ENCODE measurements at regions of chr3 and their contacts with region 1.

Region 1: GRCh38 chr3:37967260-37967881 is 23.2 kb upstream of the VILL start:
- DNase-seq: no peak
- H3K4me3 ChIP-seq: no peak overlapping the region
- CTCF ChIP-seq: peak; percentile 95

Region 2: DNA sequence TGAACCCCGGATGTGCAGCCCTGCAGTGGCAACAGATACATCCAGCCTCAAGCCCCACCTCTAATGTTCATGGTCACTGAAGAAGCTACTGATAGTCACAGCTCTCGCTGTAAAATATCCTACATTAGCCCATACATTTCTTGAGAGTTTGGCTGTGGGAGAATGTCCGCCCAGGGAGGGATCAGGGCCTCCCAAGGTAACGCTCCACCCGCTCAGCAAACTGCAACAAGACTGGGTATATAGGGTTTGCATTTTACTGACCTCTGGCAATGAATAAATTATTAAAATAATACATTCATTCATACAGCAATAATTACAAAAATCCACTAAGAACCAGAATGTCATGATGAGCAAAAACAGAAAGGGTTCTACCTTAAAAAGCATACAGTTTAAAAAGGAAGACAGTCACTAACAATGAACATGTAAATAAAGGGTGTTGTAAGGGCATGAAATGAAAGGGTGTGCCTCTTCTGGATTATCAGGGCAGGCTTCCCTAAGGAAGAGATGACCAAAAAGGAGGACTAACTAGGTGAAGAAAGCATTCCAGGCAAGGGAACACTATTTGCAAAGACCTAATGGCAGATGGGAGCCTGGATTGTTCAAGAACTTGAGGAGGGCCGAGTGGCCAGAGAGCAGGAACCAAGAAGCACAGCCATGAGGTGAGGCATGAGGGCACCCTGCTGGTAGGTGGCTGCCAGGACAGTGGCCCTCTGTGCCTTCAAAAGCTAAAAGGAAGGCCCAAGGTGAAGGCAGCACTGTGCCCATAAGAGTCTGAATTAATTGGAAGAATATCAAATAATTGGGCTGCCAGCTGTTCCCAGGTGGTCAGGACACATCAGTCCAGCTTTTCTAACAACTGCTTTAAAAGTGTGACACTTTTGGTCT is 133.8 kb before region 1 on chr3:
- CTCF ChIA-PET with region 1: interaction called, 12 read pairs
- POLR2A ChIA-PET with region 1: no interaction called
- DNase-seq: no peak
- H3K4me3 ChIP-seq: no peak overlapping the region
- CTCF ChIP-seq: no peak

Region 3: DNA sequence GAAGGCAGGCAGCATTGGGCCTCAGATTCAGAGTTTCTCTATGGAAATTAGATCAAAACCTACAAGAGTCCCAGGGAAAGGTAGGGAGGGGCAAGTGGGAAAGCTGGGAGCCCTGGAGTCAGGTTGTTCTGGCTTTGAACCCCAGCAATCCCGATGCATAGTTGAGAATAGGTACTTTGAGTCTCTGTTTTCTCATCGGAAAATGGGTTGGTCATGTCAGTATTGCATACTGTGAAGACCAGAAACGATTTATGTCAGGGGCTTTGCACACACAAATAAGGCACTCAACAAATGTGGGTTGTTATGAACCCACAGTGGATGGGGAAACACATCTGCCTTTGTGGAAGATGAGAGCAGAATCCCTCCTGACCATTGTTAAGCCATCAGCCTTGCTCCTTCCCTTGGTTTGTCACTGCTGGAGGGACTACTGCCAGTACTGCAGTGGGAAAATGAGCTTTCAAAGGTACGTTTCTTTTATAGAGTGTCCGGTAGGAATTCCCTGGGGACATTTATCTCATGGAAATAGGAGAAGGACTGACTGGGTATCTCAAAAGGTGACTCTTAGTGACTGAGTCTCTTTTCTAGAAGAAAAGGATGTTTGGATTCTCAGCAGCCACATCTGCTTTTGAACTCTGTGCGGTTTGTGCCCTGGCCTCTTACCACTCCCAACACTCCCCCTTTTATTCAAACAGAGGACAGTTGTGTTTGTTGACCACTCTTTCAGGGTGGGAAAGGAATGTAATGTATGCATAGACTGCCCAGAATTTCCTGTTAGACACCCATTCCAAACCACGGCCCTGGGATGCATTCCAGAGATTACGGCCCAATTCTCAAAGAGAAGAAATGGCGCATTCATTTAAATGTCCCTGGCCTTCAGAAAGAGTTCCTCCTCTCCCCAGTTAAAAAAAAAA is 31.4 kb before region 1 on chr3:
- CTCF ChIA-PET with region 1: interaction called, 10 read pairs
- POLR2A ChIA-PET with region 1: no interaction called
- DNase-seq: peak; percentile 84
- H3K4me3 ChIP-seq: peak overlapping the region; percentile 6; the same call in 1 of the 2 replicates
- CTCF ChIP-seq: no peak

Region 4: DNA sequence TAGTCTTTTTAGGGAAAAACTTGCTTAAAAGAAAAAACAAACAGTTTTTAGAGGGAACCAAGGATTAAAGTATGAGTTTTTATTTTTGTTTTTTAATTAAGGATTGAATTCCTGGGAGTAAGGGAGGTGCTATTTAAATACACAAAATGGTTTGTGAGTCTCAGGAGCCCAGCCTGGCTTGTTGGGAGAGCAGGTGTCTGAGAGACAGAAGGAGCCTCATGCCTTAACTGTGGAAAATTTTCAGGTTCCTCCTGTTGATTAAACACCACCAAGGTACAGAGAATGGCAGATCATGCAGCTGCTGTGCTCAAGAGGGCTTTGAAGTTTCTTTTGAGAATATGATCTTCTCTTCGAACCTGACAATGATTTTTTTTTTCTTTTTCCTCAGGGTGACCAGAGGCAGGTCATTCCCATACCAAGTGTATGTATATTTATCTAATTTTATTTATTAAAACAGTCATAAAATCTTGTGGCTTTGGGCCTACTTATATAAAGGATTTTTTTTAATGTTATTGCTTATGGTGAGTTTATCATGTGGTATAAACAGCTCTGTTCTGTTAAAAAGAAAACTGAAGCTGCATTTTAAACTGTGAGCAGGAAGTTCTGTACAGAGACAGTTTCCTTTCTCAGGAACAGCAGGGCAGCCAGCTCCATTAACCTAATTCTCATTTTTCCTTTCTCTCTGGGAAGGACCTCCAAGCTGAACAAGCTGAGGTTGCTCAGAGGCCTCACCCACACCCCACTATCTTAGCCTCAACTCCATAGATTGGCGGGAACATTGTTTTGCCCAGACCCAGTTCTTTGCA is 10.4 kb before region 1 on chr3:
- CTCF ChIA-PET with region 1: interaction called, 145 read pairs
- POLR2A ChIA-PET with region 1: no interaction called
- DNase-seq: no peak
- H3K4me3 ChIP-seq: no peak overlapping the region
- CTCF ChIP-seq: no peak

Region 5: DNA sequence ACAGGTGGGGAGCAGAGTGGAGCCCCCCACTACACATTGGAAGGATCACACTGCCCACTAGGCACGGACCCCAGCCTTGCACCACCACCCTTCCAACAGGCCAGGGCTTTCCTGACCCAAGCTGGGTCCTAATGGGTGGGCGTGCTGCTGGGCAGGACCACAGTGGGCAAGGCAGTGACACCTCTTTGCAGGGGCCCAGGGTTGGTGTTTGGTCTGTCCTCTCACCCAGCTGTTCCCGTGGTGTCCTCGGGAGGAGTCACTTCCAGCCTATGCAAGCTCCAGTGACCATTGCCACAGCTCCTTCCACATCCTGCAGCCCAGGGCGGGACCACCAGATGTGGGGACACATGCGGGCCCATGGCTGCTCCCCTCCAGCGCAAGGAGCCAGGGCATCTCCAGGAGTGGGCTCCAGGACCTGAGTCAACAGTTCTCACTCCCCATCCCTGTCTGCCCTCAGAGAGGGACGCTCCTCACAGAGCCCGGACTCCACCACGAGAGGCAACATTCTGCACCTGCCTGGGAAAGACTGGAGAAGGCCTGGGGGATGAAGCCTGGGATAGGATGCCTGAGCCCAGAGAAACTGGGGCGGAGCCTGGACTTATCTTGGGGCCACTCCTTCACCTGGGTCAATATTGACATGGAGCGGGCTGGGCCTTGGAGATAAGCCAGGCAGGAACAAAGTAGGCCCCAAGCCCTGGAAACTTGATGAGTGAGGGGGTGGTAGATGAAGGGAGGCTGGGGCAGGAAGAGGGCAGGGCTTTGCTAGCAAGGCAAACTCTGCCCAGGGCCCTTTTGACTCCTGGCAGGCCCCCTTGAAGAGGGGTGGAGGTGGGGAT is 19.3 kb after region 1 on chr3:
- CTCF ChIA-PET with region 1: interaction called, 16 read pairs
- POLR2A ChIA-PET with region 1: no interaction called
- DNase-seq: no peak
- H3K4me3 ChIP-seq: no peak overlapping the region
- CTCF ChIP-seq: no peak

Region 6: GRCh38 chr3:38083871-38084333 is 116.5 kb after region 1 on chr3:
- CTCF ChIA-PET with region 1: no interaction called
- POLR2A ChIA-PET with region 1: no interaction called
- DNase-seq: no peak
- H3K4me3 ChIP-seq: no peak overlapping the region
- CTCF ChIP-seq: no peak

Region 7: GRCh38 chr3:38247366-38248035 is 280.1 kb after region 1 on chr3:
- CTCF ChIA-PET with region 1: no interaction called
- POLR2A ChIA-PET with region 1: no interaction called
- DNase-seq: peak; percentile 71
- H3K4me3 ChIP-seq: no peak overlapping the region
- CTCF ChIP-seq: peak; percentile 35

Measured in AG04449 (cell line).